Head of caudate nucleus (tissue), 42 donors: ENCODE measurements at regions of chr2 and their contacts with region 1.

Region 1: DNA sequence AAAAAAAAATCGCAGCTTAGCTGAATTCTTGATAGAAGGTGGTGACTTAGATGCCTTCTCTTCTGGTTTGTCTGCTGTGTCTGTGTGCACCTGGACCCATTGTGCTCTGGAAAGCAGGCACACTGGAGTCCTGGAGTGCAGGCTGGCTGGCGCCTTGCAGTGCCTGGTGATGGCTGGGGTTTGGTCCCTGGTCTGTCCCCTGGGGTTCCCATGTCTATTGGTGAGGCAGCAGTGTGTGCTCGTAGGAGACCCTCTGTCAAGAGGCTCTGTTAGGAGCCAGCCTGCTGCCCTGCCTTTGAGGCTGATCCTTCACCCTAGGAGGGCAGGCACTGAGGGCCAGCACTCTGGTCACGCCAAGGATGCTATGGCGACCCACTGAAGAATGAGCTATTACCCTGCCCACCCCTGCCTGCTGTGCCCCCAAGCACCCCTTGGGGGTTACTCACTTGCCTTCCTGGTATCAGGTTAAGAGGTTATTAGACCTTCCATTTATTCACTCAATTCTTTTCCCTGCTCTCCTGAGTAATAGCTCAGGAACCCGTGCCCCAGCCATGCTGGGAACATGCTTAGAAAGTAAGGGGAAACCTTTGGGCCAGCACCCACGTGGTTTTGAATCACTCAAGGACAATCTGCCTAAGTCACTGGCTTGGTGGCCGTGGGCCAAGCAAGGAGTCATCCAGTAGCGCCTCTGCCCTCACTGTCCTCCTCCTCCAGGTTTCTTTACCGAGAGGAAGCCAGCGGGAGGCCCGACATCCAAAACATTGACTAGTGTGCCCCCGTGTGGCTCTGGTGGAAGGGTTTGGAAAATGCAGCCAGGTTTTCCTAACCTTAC is 284.5 kb downstream of the PRKCE start:
- DNase-seq: peak; percentile 71 to 93 (median 84)

Region 2: DNA sequence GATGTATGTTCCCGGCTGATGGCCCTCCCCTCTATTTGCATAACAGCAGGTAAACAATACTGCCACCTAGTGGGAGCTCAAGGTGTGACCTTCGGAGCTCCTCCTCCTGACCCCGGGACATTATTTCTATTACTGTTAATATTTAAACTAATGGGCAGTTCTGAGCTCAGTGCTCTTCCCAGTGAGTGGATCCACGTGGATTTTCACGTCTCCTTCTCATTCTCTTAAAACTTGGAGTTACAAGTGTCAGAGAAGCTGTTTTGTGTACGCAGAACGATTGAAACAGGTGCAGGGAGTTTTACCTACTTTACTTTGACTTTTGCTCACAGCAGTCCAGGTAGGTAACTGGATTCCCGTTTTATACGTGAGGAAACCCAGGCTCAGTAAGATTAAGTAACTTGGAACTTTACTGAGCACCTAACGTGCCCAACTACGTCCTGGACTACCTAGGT is 157.3 kb before region 1 on chr2:
- intact Hi-C with region 1: loop called (anchors 10 kb)
- DNase-seq: peak in 40 of 42 donors; percentile 26 to 90 (median 66)

Region 3: DNA sequence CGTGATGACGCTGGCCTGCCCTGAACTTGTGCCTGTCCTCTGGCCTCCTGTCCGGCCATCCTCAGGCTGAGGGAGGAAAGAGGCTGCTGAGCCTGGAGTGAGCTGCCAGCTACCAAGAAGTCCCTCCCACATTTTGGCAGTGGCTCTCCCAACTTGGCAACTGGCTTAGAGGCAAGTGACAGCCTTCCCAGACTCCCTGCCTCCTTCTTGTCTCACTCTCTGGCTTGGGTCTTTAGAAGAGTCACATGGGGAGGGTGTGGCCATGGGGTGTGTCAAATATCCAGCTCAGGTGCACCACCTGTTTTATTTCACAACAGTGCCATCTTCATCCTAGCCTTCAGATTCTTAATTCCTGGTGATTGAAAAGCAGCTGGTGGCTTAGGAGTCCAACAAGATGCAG is 61.7 kb before region 1 on chr2:
- intact Hi-C with region 1: no loop called
- DNase-seq: peak in 22 of 42 donors; percentile 22 to 66 (median 41)

Region 4: DNA sequence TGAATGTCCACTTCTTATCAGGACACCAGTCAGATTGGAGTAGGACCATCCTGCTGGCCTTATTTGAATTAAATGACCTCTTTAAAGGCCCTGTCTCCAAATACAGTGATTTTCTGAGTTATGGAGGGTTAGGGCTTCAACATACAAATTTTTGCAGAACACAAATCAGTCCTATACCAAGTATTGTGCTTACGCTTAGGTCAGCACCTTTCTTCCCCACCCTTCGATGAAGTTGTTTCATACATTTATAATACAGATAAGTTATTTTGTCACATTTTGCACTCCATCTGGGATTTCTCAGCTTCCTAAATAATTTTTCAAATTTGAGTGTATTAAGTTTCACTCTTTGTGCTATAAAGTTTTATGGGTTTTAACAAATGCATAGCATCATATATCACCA is 170.7 kb after region 1 on chr2:
- intact Hi-C with region 1: no loop called
- DNase-seq: no peak